T-cell (primary cell): ENCODE measurements at regions of chr7 and their contacts with region 1.

Region 1: GRCh38 chr7:124284937-124285336 is 252.1 kb upstream of the TMEM229A start:
- DNase-seq: no peak
- ATAC-seq: no peak
- H3K4me3 ChIP-seq: no peak overlapping the region
- H3K4me3 Mint-ChIP-seq: no peak overlapping the region
- H3K27ac ChIP-seq: no peak overlapping the region
- H3K27ac Mint-ChIP-seq: no peak overlapping the region
- H3K4me1 ChIP-seq: no peaks in the 10 kb centered on the region
- H3K4me1 Mint-ChIP-seq: no peaks in the 10 kb centered on the region
- H3K27me3 ChIP-seq: no peaks in the 10 kb centered on the region
- H3K27me3 Mint-ChIP-seq: no peaks in the 10 kb centered on the region

Region 2: GRCh38 chr7:124191713-124192112 is 93.2 kb before region 1 on chr7:
- CTCF ChIA-PET with region 1: no interaction called
- POLR2A ChIA-PET with region 1: interaction called in 1 of 2 experiments, 10 read pairs
- DNase-seq: no peak
- ATAC-seq: no peak
- H3K4me3 ChIP-seq: no peak overlapping the region
- H3K4me3 Mint-ChIP-seq: no peak overlapping the region
- H3K27ac ChIP-seq: no peak overlapping the region
- H3K27ac Mint-ChIP-seq: no peak overlapping the region
- H3K4me1 ChIP-seq: no peaks in the 10 kb centered on the region
- H3K4me1 Mint-ChIP-seq: no peaks in the 10 kb centered on the region
- H3K27me3 ChIP-seq: no peaks in the 10 kb centered on the region
- H3K27me3 Mint-ChIP-seq: no peaks in the 10 kb centered on the region

Region 3: DNA sequence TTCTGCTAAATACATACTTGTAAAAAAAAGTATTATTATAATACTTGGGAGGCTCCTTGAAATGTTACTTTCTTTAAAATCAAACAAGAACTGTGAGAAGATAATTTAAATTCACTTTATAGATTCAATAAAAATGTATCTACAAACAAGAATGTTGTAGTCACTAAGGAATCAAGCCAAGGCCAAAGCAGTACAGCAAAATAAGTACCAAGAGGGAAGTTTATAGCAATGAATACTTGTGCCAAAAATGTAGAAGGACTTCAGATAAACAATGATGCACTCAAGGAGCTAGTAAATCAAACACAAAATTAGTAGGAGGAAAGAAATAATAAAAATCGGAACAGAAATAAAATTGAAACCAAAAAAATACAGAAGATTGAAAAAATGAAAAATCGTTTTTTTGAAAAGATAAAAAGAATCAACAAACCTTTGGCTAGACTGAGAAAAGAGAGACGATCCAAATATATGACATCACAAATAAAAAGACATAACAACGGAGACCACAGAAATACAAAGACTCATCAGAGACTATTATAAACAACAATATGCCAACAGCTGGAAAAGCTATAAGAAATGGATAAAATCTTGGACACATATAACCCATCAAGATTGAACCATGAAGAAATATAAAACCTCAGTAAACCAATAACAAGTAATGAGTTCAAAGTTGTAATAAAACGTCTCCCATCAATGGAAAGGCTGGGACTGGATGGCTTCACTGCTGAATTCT is 33.9 kb after region 1 on chr7:
- CTCF ChIA-PET with region 1: no interaction called
- POLR2A ChIA-PET with region 1: no interaction called
- DNase-seq: no peak
- ATAC-seq: no peak
- H3K4me3 ChIP-seq: no peak overlapping the region
- H3K4me3 Mint-ChIP-seq: no peak overlapping the region
- H3K27ac ChIP-seq: no peak overlapping the region
- H3K27ac Mint-ChIP-seq: no peak overlapping the region
- H3K4me1 ChIP-seq: no peaks in the 10 kb centered on the region
- H3K4me1 Mint-ChIP-seq: no peaks in the 10 kb centered on the region
- H3K27me3 ChIP-seq: no peaks in the 10 kb centered on the region
- H3K27me3 Mint-ChIP-seq: no peaks in the 10 kb centered on the region